Calu3 (cell line): ENCODE measurements at regions of chr13 and their contacts with region 1.

Region 1: DNA sequence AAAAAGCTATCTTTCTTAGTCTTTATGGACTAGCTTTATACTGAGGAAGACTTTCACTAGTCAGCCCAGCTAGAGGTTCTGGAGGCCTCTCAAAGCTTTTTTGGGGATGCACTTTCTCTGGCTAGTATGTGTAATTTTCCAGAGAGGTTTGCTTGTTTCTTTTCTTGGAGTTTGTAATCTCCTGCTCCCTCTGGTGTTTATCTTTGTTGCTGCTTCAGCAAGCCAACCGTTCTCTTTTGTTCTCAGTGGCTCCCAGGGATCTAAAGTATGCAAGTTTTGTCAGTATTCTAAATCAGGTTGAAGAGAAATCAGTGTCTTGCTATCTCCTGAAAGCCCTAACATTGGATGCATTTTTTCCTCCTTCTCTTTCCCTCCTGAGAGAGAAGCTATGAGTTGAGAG is 121.1 kb upstream of the MYO16 start:
- DNase-seq: peak; percentile 0
- H3K4me3 Mint-ChIP-seq: no peak overlapping the region
- H3K27ac Mint-ChIP-seq: no peak overlapping the region
- H3K4me1 Mint-ChIP-seq: no peaks in the 10 kb centered on the region
- H3K27me3 Mint-ChIP-seq: no peaks in the 10 kb centered on the region
- CTCF ChIP-seq: peak; percentile 18

Region 2: DNA sequence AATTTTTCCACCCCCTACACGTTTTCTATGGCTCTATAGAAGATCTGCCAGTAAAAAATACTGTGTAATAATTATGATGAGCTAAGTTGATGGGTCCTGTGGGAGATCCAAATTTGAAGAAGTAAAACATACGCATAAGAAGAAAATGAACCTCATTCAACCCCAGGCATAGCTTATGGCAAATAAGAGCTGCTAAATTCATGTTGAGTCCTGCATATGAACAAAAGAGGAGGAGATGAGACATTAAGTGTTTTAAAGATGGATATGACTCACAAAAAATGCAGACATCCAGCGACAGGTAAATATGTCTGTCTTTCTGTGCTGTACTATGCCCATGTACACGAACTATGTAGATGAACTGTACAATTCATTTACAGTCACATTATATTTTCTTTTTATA is 394.9 kb before region 1 on chr13:
- CTCF ChIA-PET with region 1: no interaction called
- intact Hi-C with region 1: no loop called
- DNase-seq: no peak
- H3K4me3 Mint-ChIP-seq: no peak overlapping the region
- H3K27ac Mint-ChIP-seq: no peak overlapping the region
- H3K4me1 Mint-ChIP-seq: no peaks in the 10 kb centered on the region
- H3K27me3 Mint-ChIP-seq: no peaks in the 10 kb centered on the region
- CTCF ChIP-seq: no peak

Region 3: DNA sequence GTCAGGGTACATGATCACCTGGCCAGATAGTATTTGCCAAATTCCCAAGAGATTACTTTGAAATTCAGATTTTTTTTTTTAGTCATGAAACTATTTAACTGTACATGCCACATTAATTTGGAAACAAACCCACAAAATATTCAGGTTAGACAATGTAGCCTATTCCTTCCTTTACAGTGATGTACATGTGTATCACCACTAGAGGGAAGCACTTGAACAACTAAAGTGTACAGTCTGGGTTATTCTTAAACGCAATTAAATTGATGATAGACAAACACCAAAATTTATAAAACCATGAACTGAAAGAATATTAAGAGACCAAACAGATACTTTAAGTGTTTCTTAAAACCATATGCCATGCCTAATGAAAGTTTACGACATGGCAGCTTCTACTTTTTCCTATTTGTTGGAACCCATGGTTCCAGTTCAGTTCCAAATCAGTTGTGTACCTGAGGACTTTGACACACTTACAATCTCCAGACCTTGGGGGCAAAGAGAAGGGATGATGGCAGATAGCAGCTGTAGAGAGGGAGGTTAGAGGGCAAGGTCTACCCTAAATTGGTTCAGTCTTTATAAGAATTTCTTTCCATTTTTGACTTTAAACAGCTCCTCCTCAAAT is 185.9 kb before region 1 on chr13:
- CTCF ChIA-PET with region 1: no interaction called
- intact Hi-C with region 1: loop called (anchors 5 kb)
- DNase-seq: no peak
- H3K4me3 Mint-ChIP-seq: no peak overlapping the region
- H3K27ac Mint-ChIP-seq: no peak overlapping the region
- H3K4me1 Mint-ChIP-seq: no peaks in the 10 kb centered on the region
- H3K27me3 Mint-ChIP-seq: no peaks in the 10 kb centered on the region
- CTCF ChIP-seq: no peak

Region 4: DNA sequence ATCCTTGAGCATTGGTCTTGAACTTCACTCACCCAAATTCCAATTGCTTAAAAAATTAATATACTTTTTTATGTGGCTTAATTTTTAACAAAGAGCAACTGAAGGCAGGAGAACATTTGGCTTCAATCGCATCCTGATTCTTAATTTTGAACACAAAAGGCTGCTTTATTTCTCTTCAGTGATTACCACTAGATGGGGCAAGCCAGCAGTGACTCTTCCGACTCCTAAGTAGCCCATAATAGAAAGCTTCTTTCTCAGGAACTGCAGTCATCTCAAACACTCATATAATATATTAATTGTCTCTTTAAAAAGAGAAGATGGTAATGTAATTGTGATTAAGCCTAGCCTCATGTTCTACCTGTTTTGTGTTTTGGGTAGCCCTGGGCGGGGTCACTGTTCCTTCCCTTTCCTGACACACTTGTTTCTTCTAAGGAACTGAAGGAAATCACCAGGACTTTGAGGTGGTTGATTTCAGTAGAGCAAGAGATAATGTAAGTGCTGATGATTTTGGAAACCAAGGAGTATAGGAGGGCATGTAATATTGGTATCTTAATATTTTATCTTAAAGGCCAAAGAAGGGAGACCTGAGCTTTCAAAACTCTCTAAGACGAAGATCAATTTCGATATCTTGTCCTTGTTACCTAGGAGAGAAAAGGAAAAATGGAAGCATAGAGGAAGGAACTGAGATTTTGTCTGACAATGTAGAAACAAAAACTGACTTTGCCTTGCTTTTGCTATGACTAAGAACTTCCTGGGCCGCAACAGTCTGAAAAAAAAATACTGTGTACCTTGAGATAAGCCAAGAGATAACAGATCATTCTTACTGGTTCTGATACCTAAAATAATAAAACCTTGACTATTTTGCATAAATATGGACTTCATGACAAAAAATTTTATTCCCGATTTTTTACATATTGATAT is 165.6 kb before region 1 on chr13:
- CTCF ChIA-PET with region 1: no interaction called
- intact Hi-C with region 1: loop called (anchors 5 kb)
- DNase-seq: no peak
- H3K4me3 Mint-ChIP-seq: no peak overlapping the region
- H3K27ac Mint-ChIP-seq: no peak overlapping the region
- H3K4me1 Mint-ChIP-seq: peaks cover 10% of the 10 kb centered on the region
- H3K27me3 Mint-ChIP-seq: no peaks in the 10 kb centered on the region
- CTCF ChIP-seq: no peak